ENCODE measurements at regions of chr15 and their contacts with region 1.

Region 1: GRCh38 chr15:43285609-43286037 is 18.9 kb upstream of the TGM5 start:
- DNase-seq: peak; percentile 36
- ATAC-seq: peak; percentile 73
- H3K4me3 Mint-ChIP-seq: no peak overlapping the region
- H3K27ac Mint-ChIP-seq: no peak overlapping the region
- H3K4me1 Mint-ChIP-seq: no peaks in the 10 kb centered on the region
- H3K27me3 Mint-ChIP-seq: peaks cover 2% of the 10 kb centered on the region
- CTCF ChIP-seq: peak; percentile 63

Region 2: GRCh38 chr15:43204016-43204901 is 81.4 kb before region 1 on chr15:
- CTCF ChIA-PET with region 1: interaction called, 84 read pairs
- POLR2A ChIA-PET with region 1: no interaction called
- DNase-seq: peak; percentile 67
- ATAC-seq: peak; percentile 64
- H3K4me3 Mint-ChIP-seq: no peak overlapping the region
- H3K27ac Mint-ChIP-seq: no peak overlapping the region
- H3K4me1 Mint-ChIP-seq: peaks cover 5% of the 10 kb centered on the region
- H3K27me3 Mint-ChIP-seq: no peaks in the 10 kb centered on the region; the same call in 1 of the 2 replicates
- CTCF ChIP-seq: peak; percentile 47; the same call in 1 of the 2 replicates

Region 3: GRCh38 chr15:43230640-43231115 is 54.9 kb before region 1 on chr15:
- CTCF ChIA-PET with region 1: interaction called, 101 read pairs
- POLR2A ChIA-PET with region 1: no interaction called
- DNase-seq: no peak
- ATAC-seq: no peak
- H3K4me3 Mint-ChIP-seq: no peak overlapping the region
- H3K27ac Mint-ChIP-seq: no peak overlapping the region
- H3K4me1 Mint-ChIP-seq: no peaks in the 10 kb centered on the region
- H3K27me3 Mint-ChIP-seq: no peaks in the 10 kb centered on the region; the same call in 1 of the 2 replicates
- CTCF ChIP-seq: no peak

Region 4: DNA sequence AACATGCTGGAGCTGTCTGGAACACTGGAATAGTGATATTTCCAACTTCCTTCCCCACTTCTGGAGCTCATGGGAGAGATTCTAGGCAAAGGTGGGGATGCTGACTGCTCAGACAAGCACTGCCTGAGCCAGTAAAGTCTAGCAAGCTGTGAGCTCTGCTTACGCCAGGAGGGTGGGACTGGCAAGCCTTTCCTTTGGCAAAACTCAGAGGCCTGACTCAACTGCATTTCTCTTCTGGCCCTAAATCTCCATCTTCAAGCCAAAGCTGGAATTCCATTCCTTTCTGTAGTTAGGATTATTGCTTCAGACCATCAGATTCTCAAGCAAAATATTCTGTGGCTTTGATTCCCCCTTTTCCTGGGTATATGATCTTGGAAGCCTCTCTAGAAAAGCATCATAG is 44.5 kb before region 1 on chr15:
- CTCF ChIA-PET with region 1: interaction called, 11 read pairs
- POLR2A ChIA-PET with region 1: no interaction called
- DNase-seq: no peak
- ATAC-seq: no peak
- H3K4me3 Mint-ChIP-seq: no peak overlapping the region
- H3K27ac Mint-ChIP-seq: no peak overlapping the region
- H3K4me1 Mint-ChIP-seq: no peaks in the 10 kb centered on the region
- H3K27me3 Mint-ChIP-seq: peaks cover 3% of the 10 kb centered on the region
- CTCF ChIP-seq: no peak

Region 5: GRCh38 chr15:43268111-43269105 is 17.2 kb before region 1 on chr15:
- CTCF ChIA-PET with region 1: interaction called, 14 read pairs
- POLR2A ChIA-PET with region 1: no interaction called
- DNase-seq: peak; percentile 75
- ATAC-seq: peak; percentile 88
- H3K4me3 Mint-ChIP-seq: no peak overlapping the region
- H3K27ac Mint-ChIP-seq: no peak overlapping the region
- H3K4me1 Mint-ChIP-seq: no peaks in the 10 kb centered on the region
- H3K27me3 Mint-ChIP-seq: peaks cover 3% of the 10 kb centered on the region; the same call in 1 of the 2 replicates
- CTCF ChIP-seq: no peak